PC-3 (cell line): ENCODE measurements at regions of chr9 and their contacts with region 1.

Region 1: DNA sequence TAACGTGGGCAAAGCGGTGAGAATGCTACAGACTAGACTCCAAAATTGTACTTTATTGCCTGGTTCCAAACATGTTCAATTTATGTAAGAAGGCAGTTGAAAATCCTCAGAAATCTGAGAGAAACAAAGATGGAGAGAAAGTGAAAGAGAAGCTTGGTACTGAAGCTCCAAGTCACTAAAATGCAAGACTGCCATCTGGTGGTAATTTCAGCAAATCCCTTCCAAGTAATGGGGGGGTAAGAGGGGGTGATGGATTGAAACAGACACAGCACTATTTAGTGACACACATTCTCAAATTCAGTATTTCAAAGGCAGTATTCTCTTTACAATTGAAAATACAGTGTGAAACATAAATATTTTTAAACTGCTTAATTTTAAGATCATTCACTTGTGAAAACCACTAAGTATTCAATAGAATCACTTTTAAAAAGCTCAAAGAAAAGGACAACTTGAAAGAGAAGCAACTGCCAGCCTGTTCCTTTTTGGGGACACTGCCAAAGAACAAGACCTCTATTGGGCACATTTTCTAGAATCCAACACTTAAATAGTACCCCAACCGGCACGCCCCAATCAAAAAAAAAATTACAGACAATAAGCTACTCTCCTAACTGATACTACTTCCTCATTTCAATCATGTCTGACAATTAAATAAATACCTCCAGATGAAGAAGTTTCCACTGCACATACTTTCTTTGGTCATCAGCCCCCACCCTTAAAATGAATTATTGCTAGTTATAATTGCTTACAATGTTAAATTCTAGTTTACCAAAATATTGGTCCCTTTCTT is 131.5 kb downstream of the AGTPBP1 start:
- DNase-seq: peak; percentile 73
- ATAC-seq: peak; percentile 79
- H3K4me3 ChIP-seq: peak overlapping the region; percentile 45; the same call in 1 of the 2 replicates
- H3K27ac ChIP-seq: no peak overlapping the region
- H3K4me1 ChIP-seq: no peaks in the 10 kb centered on the region
- H3K27me3 ChIP-seq: no peaks in the 10 kb centered on the region
- CTCF ChIP-seq: peak; percentile 86

Region 2: DNA sequence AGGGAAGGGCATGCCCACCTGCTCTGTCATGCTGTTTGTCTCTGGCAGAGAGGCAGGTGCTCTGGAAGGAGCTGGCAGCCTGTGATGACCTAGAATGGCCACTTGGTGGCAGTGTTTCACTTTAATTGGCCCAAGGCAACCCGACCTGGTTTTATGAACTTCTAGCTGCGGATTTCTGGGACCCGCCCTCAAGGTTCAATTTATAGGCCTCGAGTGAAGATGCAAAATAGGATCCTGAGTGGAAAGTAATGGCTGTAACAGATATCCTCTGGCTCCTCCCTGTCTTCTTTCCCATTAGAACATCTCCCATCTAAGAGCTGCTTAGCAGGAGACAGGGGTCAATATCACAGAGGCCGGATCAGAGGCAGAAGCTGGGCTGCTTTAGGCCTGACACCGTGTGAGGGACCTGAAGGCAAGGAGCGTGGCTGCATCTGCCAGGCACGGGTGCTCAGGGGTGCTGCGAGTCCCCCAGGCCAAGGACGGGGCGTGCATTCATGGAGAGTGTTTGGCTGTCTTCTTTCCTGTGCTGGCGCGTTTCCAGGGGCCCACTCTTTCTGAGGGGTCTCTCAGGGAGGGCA is 1213.0 kb before region 1 on chr9:
- CTCF ChIA-PET with region 1: interaction called, 19 read pairs
- POLR2A ChIA-PET with region 1: no interaction called
- intact Hi-C with region 1: loop called (anchors 1 kb)
- DNase-seq: peak; percentile 78
- ATAC-seq: peak; percentile 80
- H3K4me3 ChIP-seq: no peak overlapping the region
- H3K27ac ChIP-seq: no peak overlapping the region
- H3K4me1 ChIP-seq: peaks cover 7% of the 10 kb centered on the region; the same call in 1 of the 2 replicates
- H3K27me3 ChIP-seq: no peaks in the 10 kb centered on the region
- CTCF ChIP-seq: peak; percentile 75

Region 3: GRCh38 chr9:85586684-85587083 is 23.6 kb before region 1 on chr9:
- CTCF ChIA-PET with region 1: interaction called, 17 read pairs
- POLR2A ChIA-PET with region 1: no interaction called
- intact Hi-C with region 1: no loop called
- DNase-seq: no peak
- ATAC-seq: no peak
- H3K4me3 ChIP-seq: no peak overlapping the region
- H3K27ac ChIP-seq: no peak overlapping the region
- H3K4me1 ChIP-seq: no peaks in the 10 kb centered on the region
- H3K27me3 ChIP-seq: no peaks in the 10 kb centered on the region
- CTCF ChIP-seq: no peak